ENCODE measurements at regions of chrX and their contacts with region 1.

Region 1: GRCh38 chrX:153927922-153928760 is 2.1 kb upstream of the ARHGAP4 start:
- DNase-seq: peak; percentile 83
- ATAC-seq: peak; percentile 66
- H3K4me3 Mint-ChIP-seq: peak overlapping the region; percentile 87
- H3K27ac Mint-ChIP-seq: peak overlapping the region; percentile 96
- H3K4me1 Mint-ChIP-seq: peaks cover 46% of the 10 kb centered on the region
- H3K27me3 Mint-ChIP-seq: no peaks in the 10 kb centered on the region
- CTCF ChIP-seq: no peak

Region 2: DNA sequence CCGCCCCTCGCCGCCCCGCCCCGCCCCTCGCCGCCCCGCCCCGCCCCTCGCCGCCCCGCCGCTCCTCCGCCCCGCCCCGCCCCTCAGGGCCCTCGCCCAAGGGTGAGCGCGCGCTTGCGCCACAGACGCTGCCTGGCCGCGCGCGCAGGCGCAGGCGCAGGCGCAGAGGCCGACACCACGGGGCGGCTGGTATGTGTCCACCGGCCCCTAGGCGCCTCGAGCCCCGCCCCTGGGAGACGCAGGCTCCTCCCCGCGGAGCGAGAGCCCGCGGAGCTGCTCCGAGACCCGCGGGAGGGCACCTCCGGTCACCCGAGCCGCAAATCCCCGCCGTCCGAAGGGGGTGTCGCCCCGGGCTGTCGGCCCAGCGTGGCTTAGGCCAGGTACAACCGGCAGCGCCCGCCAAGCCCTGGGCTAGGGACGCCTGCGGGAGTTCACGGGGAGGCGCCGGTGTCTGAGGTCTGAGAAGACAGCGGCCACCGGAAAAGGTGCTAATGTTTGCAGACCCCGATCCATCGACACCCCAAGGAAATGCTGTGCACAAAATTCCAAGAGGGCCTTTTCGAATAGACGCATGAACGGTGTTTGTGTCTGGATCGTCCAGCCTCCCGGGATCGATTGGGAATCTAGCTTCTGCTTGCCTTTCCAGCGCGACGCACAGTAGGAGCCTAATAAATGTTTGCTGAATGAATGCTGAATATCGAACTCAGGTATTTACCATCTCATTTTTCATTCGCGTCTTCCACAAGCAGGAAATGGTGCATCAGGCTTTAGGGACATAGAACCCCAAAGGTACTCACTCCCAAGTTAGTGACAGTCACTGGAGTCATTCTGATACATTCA is 328.7 kb before region 1 on chrX:
- CTCF ChIA-PET with region 1: no interaction called
- POLR2A ChIA-PET with region 1: interaction called, 3 read pairs
- intact Hi-C with region 1: loop called (anchors 5 kb)
- DNase-seq: peak; percentile 82
- ATAC-seq: peak; percentile 84
- H3K4me3 Mint-ChIP-seq: peak overlapping the region; percentile 77
- H3K27ac Mint-ChIP-seq: no peak overlapping the region
- H3K4me1 Mint-ChIP-seq: peaks cover 36% of the 10 kb centered on the region
- H3K27me3 Mint-ChIP-seq: no peaks in the 10 kb centered on the region
- CTCF ChIP-seq: no peak

Region 3: DNA sequence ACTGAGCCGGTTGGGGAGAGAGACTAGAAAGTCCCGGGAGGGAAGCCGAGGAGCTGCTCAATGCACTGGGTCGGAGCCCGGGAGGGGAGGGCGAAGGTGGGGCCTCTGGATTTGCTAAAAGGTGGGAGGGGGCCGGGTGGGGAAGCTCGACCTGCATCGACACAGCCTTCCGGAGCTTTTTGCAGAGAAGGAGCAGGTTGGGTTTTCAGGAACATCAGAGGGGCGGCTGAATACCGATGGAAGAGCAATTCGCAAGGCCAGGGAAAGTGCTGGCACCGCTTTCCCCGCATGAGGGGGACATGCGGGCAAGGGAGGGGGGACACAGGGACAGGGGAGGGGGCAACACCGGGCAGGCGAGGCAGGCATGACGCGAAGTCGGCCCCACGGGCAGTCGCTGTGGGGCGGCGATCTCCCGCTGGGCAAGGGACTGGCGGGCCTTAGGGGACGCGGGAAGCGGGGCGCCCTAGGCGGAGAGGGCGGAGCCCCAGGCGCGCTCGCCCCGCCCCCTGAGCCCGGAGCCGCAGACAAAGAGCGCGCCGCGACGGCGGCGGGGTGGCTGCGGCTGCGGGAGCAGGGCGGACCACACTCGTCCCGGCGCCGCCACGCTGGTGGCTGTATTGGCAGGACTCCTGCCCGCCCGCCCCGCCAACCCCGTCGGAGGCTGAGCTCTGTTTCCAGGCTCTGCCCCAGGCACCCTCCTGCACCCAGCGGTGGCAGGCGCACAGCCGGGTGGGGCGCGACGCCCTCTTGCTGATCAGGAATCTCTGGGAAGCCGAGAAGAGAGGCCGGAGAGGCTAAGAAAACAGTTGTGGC is 109.4 kb before region 1 on chrX:
- CTCF ChIA-PET with region 1: no interaction called
- POLR2A ChIA-PET with region 1: interaction called, 3 read pairs
- intact Hi-C with region 1: loop called (anchors 5 kb)
- DNase-seq: peak; percentile 47
- ATAC-seq: peak; percentile 83
- H3K4me3 Mint-ChIP-seq: no peak overlapping the region
- H3K27ac Mint-ChIP-seq: no peak overlapping the region
- H3K4me1 Mint-ChIP-seq: peaks cover 9% of the 10 kb centered on the region
- H3K27me3 Mint-ChIP-seq: peaks cover 14% of the 10 kb centered on the region
- CTCF ChIP-seq: no peak

Region 4: GRCh38 chrX:153900831-153901752 is 27.0 kb before region 1 on chrX:
- CTCF ChIA-PET with region 1: interaction called, 6 read pairs
- POLR2A ChIA-PET with region 1: interaction called, 25 read pairs
- intact Hi-C with region 1: loop called (anchors 2 kb)
- DNase-seq: peak; percentile 47
- ATAC-seq: peak; percentile 91
- H3K4me3 Mint-ChIP-seq: peak overlapping the region; percentile 72
- H3K27ac Mint-ChIP-seq: peak overlapping the region; percentile 83
- H3K4me1 Mint-ChIP-seq: peaks cover 44% of the 10 kb centered on the region
- H3K27me3 Mint-ChIP-seq: no peaks in the 10 kb centered on the region
- CTCF ChIP-seq: no peak

Region 5: DNA sequence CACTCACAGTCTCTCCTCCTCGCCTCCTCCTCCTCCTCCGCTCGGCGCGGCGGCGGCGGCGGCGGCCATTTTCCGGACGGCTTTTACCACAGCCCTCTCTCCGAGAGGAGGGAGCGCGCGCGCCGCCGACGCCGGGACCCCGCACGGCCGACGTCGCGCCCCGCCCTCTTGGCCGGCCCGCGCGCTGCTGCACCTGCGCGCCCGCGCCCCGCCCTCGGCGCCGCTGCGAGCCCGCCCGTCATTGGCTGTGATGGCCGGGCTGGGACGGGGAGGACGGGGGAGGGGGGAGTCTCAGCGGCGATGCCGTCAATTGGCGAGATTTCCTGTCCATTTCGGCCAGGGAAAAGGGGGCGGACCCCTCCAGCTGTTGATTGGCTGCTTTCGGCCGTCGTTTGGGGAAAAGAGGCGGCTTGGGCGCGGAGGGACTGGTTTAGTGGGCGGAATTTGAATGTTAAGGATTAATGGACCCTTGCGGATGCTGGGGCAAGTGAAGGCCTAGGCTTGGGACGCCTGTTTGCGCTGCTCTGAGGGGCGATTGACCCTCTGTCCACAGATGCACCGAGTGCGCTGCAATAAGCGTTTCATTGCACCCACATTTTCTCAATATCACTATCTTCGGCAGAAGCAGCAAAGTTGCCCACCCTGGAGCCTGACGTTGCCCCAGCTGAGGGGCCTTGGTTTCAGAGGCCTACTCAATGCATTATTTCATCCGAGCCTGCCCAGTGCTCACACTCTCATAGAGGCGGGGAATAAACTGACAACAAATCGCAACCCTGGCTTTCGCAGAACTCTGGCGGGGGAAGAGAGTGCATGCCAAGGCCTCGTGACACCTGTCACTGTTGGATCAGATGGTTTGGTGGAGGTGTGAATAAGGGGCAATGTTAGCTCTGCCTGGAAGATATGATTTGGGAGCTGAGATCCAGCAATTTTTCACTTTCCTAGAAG is 169.7 kb after region 1 on chrX and contains the start of gene MECP2:
- CTCF ChIA-PET with region 1: no interaction called
- POLR2A ChIA-PET with region 1: no interaction called
- intact Hi-C with region 1: loop called (anchors 1 kb)
- DNase-seq: peak; percentile 75
- ATAC-seq: peak; percentile 93
- H3K4me3 Mint-ChIP-seq: peak within 1 kb of the TSS; percentile 90
- H3K27ac Mint-ChIP-seq: peak within 1 kb of the TSS; percentile 85
- H3K4me1 Mint-ChIP-seq: peaks cover 39% of the 10 kb centered on the region
- H3K27me3 Mint-ChIP-seq: peaks cover 2% of the 10 kb centered on the region
- CTCF ChIP-seq: no peak
- total RNA-seq, gene MECP2: 56.8 and 69.0 TPM in 2 replicates

Region 6: GRCh38 chrX:155026726-155027508 is 1098.8 kb after region 1 on chrX and contains the start of gene FUNDC2:
- CTCF ChIA-PET with region 1: no interaction called
- POLR2A ChIA-PET with region 1: no interaction called
- intact Hi-C with region 1: no loop called
- DNase-seq: peak; percentile 83
- ATAC-seq: peak; percentile 86
- H3K4me3 Mint-ChIP-seq: peak within 1 kb of the TSS; percentile 87
- H3K27ac Mint-ChIP-seq: peak within 1 kb of the TSS; percentile 93
- H3K4me1 Mint-ChIP-seq: peaks cover 21% of the 10 kb centered on the region
- H3K27me3 Mint-ChIP-seq: no peaks in the 10 kb centered on the region
- CTCF ChIP-seq: no peak
- total RNA-seq, gene FUNDC2: 62.0 and 67.6 TPM in 2 replicates

Measured in activated B cell treated with CpG ODN at 0.5 μM for 24 hours (primary cell).